Endothelial cell of umbilical vein (primary cell): ENCODE measurements at regions of chr4 and their contacts with region 1.

Region 1: GRCh38 chr4:173168396-173169177 is at the start of gene GALNT7:
- DNase-seq: peak; percentile 61
- H3K4me3 ChIP-seq: peak within 1 kb of the TSS; percentile 81 to 94 (median 83)
- H3K27ac ChIP-seq: peak within 1 kb of the TSS; percentile 62
- H3K4me1 ChIP-seq: peaks cover 23% of the 10 kb centered on the region
- H3K27me3 ChIP-seq: no peaks in the 10 kb centered on the region
- CTCF ChIP-seq: no peak
- POLR2A ChIP-seq: no peak
- total RNA-seq, gene GALNT7: 54.6 and 63.3 TPM in 2 replicates

Region 2: DNA sequence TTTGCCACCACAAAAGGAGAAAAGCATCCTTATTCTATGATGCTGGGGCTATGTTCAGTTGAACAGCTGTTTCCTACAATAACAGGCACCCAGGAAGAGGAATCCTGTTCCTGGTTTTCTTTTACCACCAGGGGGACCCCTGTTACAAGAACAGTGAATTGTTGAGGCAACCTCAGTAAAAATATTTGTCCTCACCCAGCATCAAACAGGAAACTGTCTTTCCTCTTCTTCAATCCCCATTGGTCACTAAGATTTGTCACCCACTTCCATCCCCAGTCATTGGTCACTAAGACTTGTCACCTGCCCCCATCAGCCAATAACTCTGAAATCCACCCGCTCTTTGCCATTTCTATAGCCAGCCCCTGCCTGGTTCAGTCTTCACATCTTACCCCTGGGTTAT is 143.5 kb before region 1 on chr4:
- CTCF ChIA-PET with region 1: interaction called, 7 read pairs
- POLR2A ChIA-PET with region 1: no interaction called
- dilution Hi-C with region 1: no loop called
- intact Hi-C with region 1: loop called (anchors 1 kb)
- DNase-seq: peak; percentile 38
- H3K4me3 ChIP-seq: no peak overlapping the region
- H3K27ac ChIP-seq: no peak overlapping the region
- H3K4me1 ChIP-seq: no peaks in the 10 kb centered on the region
- H3K27me3 ChIP-seq: no peaks in the 10 kb centered on the region
- CTCF ChIP-seq: peak; percentile 33 to 41
- POLR2A ChIP-seq: no peak

Region 3: DNA sequence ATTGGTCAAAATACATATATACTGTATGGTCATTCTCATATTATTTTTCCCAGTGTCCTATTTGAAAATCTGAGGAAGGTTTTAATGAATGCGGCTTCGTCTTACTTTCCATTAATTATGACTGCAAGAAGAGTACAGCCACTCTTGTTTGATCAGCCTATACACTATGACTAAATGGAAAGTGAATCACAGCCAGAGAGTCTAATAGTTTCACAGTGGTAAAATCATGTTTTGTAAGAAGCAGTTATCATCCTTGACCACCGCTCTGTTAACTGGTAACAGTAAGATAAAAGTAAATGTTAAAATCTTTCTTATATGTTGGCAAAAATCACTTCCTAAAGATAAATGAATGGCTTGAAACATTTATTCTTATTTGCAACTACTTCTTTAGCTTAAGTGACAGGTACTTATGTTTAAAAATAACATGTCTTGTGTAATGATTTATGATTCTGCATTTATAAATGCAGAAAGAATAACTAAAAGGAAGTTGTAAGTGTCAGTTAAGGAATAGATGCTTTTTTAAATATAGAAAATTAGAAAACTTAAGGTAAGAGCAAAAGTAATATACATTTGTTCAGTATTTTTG is 13.3 kb after region 1 on chr4:
- CTCF ChIA-PET with region 1: interaction called, 8 read pairs
- POLR2A ChIA-PET with region 1: interaction called, 6 read pairs
- dilution Hi-C with region 1: no loop called
- intact Hi-C with region 1: loop called (anchors 1 kb)
- DNase-seq: peak; percentile 88
- H3K4me3 ChIP-seq: no peak overlapping the region
- H3K27ac ChIP-seq: peak overlapping the region; percentile 74
- H3K4me1 ChIP-seq: peaks cover 46% of the 10 kb centered on the region
- H3K27me3 ChIP-seq: no peaks in the 10 kb centered on the region
- CTCF ChIP-seq: no peak
- POLR2A ChIP-seq: no peak

Region 4: DNA sequence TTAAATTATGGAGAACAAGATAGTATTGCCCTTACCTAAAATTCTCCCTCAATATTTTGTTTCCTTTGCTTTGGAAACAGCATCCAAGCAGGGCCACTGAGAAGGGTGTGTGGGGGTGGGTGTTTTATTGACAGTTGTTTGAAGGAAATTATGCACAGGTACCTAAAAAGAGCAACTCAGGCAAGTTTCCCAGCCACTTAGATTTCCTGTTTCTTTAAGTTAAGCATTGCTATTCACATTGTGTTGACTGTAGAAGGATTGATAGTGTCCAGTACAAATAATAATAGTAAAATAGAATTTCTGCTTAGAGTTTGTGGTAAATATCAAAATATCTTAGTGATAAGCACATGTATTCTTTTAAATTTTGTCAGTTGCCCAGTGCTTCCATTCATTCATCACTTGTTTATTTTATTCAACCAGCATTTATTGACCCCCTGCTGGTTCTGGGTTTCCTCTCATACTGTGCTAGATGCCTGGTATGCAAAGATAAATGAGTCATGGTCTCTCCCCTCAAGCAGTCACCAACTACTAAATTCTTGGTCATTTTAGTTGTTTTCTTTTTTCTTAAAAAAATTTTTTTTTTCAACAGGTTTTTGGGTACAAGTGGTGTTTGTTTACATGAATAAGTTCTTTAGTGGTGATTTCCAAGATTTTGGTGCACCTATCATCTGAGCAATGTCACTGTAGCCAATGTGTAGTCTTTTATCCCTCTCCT is 50.0 kb after region 1 on chr4:
- CTCF ChIA-PET with region 1: no interaction called
- POLR2A ChIA-PET with region 1: no interaction called
- dilution Hi-C with region 1: no loop called
- intact Hi-C with region 1: loop called (anchors 2 kb)
- DNase-seq: peak; percentile 83
- H3K4me3 ChIP-seq: no peak overlapping the region
- H3K27ac ChIP-seq: peak overlapping the region; percentile 48
- H3K4me1 ChIP-seq: peaks cover 21% of the 10 kb centered on the region
- H3K27me3 ChIP-seq: no peaks in the 10 kb centered on the region
- CTCF ChIP-seq: no peak
- POLR2A ChIP-seq: no peak

Region 5: DNA sequence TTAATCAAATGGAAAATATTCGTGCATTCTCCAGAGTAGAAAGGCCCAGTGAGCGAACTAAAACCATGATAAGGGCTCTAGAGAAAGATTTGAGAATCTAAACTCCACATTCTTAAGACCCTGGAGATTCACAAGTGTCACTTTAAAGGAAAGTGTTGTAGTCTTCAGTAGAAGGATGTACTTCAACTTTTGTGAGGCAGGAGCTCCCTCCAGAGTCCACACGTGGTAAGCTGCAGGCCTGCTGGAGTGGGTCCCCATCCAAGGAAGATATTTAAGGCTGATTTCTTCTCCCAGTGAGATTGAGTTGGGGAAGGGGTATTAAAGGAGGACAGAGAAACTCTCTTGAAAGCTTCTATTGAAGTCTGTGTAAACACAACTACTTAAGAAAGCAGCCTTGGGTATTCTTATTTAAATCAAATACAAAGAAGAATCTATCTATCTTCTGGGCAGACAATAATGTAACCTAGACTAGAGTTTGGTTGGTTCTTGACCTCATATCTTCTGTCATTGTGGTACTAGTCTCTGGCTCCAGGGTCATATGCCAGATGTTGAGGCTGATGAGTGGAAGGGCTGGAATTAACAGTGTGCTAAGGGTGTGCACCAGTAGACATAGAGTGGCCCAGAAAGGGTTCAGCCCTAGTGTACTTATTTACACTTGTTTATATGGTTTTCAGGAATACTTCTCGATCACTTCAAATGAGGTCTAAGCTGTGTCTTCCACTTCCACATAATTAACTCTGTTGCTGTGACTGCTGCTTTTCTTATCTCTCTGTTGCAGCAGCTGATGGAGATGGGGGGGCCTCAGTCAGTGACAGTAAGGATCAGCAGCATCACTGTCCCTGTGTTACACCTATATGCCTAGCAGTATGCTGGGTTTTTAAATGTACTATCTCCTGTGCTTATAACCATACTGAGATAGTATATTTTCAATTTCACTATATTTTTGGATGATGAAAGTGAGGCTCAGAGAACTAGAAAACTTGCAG is 89.4 kb after region 1 on chr4:
- CTCF ChIA-PET with region 1: interaction called, 26 read pairs
- POLR2A ChIA-PET with region 1: no interaction called
- dilution Hi-C with region 1: no loop called
- intact Hi-C with region 1: loop called (anchors 1 kb)
- DNase-seq: peak; percentile 74
- H3K4me3 ChIP-seq: no peak overlapping the region
- H3K27ac ChIP-seq: no peak overlapping the region
- H3K4me1 ChIP-seq: peaks cover 2% of the 10 kb centered on the region
- H3K27me3 ChIP-seq: no peaks in the 10 kb centered on the region
- CTCF ChIP-seq: peak; percentile 76 to 93
- POLR2A ChIP-seq: no peak

Region 6: GRCh38 chr4:173360587-173361221 is 192.1 kb after region 1 on chr4:
- CTCF ChIA-PET with region 1: no interaction called
- POLR2A ChIA-PET with region 1: no interaction called
- dilution Hi-C with region 1: no loop called
- intact Hi-C with region 1: no loop called
- DNase-seq: peak; percentile 12
- H3K4me3 ChIP-seq: no peak overlapping the region
- H3K27ac ChIP-seq: no peak overlapping the region
- H3K4me1 ChIP-seq: no peaks in the 10 kb centered on the region
- H3K27me3 ChIP-seq: peaks cover 2 to 7% of the 10 kb centered on the region in 2 experiments
- CTCF ChIP-seq: peak in 1 of 2 donors; percentile 30
- POLR2A ChIP-seq: no peak